ENCODE measurements at regions of chr9 and their contacts with region 1.

Region 1: GRCh38 chr9:124428751-124429529 is 13.7 kb upstream of the PSMB7 start:
- DNase-seq: no peak
- H3K4me3 ChIP-seq: no peak overlapping the region
- H3K27ac ChIP-seq: no peak overlapping the region
- H3K4me1 ChIP-seq: no peaks in the 10 kb centered on the region
- H3K27me3 ChIP-seq: no peaks in the 10 kb centered on the region
- CTCF ChIP-seq: no peak

Region 2: DNA sequence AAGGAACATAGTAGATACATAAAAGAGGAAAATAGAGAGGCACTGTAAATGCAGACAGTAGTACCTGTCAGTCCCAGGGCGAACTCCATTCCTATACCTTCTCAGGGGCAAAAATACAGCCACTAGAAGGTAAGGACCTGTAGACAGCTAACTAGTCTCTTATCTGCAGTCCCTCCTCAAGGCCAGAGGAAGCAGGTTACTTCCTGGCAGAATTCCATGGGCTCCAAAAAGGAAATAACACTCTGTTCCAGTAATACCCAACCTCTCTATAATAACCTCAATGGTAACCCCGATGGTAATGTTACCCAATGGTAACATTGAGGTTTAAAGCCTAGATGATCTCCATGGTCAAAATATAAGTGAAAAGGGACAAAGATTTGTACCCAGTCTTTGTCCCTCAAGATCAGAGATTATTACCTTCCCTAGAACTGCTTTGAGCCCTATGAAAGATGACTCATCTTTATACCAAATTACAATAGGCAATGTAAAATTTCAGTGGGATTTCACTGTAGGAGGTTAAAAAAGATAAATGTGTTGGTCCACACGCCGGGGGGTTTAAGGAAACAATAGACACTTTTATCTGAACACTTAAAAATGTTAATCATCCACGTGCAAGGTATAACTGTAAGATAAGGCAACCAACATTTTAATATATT is 612.0 kb before region 1 on chr9:
- CTCF ChIA-PET with region 1: interaction called, 14 read pairs
- POLR2A ChIA-PET with region 1: no interaction called
- intact Hi-C with region 1: no loop called
- DNase-seq: no peak
- H3K4me3 ChIP-seq: no peak overlapping the region
- H3K27ac ChIP-seq: no peak overlapping the region
- H3K4me1 ChIP-seq: no peaks in the 10 kb centered on the region
- H3K27me3 ChIP-seq: no peaks in the 10 kb centered on the region
- CTCF ChIP-seq: no peak